Heart left ventricle (tissue), 16 donors: ENCODE measurements at regions of chr12 and their contacts with region 1.

Region 1: GRCh38 chr12:89542912-89543592 is 17.2 kb upstream of the POC1B start:
- DNase-seq: peak in 4 of 5 donors; percentile 39 to 63 (median 53)
- ATAC-seq: peak; percentile 47 to 79 (median 73)
- H3K4me3 ChIP-seq: no peak overlapping the region
- H3K27ac ChIP-seq: no peak overlapping the region
- H3K4me1 ChIP-seq: peaks cover 0 to 32% (median 19%) of the 10 kb centered on the region in 12 donors
- H3K27me3 ChIP-seq: no peaks in the 10 kb centered on the region
- CTCF ChIP-seq: peak; percentile 79 to 93 (median 88)
- POLR2A ChIP-seq: no peak

Region 2: DNA sequence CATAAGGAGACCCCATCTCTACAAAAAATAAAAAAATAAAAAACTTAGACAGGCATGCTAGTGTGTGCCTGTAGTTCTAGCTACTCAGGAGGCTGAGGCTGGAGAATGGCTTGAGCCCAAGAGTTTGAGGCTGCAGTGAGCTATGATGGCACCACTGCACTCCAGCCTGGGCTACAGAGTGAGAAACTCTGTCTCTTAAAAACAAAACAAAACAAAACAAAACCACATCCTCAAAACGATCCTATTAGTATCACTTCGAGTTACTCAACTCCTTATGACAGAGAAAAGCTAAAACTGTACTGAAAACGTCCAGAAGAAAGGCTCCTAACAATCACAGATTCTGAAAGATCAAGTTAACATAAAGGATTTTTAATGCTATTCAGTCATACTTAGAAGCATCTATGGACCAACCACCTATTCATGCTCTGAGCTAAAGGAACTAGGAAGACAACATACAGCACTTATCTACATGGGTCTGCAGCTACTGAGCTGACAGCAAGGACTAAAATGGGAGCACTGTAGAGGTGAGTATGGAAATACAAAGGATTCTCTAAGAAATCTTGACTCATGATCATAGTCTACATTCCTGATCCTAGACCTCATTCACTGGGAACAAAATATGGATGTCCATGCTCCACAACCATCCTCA is 115.4 kb before region 1 on chr12:
- intact Hi-C with region 1: no loop called
- DNase-seq: no peak
- ATAC-seq: peak in 1 of 4 donors; percentile 26
- H3K4me3 ChIP-seq: no peak overlapping the region
- H3K27ac ChIP-seq: peak overlapping the region in 1 of 12 donors; percentile 72
- H3K4me1 ChIP-seq: peaks cover 0 to 22% (median 0%) of the 10 kb centered on the region in 12 donors
- H3K27me3 ChIP-seq: no peaks in the 10 kb centered on the region
- CTCF ChIP-seq: no peak
- POLR2A ChIP-seq: no peak

Region 3: DNA sequence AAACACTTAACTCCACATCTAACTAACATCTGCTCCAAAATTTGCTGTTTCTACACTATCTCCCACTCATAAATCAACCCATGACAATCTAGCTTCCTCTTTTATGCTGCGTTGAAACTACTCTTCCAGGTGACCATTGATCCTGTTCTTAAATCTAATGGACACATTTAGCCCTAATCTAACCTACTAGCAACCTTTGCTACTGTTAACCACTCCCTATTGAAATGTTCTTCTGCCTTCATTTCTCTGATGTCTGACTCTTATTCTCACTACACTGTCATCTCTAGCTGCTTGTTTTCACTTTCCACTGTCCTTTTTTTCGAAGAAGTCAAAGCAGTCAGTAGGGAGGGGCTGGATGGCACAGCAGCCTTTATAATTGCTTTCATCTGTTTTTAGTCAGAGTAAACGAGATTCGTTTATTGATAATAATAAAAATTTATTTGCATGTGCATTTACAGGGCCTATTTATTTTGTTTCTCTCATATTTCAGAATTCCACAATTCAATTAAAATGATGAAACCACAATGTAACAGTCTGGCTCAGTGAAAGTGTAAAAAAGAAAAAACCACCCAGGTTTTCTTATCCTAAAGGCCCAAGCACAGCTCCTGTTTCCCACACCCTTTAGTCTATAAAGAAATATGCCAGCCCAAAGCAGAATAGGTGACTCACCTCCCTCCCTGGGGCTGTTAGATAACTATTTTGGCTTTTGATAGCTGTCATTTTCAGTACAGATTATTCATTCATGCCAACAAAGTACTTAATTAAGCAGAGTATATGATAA is 120.7 kb after region 1 on chr12:
- intact Hi-C with region 1: no loop called
- DNase-seq: no peak
- ATAC-seq: peak in 1 of 4 donors; percentile 29
- H3K4me3 ChIP-seq: no peak overlapping the region
- H3K27ac ChIP-seq: no peak overlapping the region
- H3K4me1 ChIP-seq: peaks cover 0 to 49% (median 28%) of the 10 kb centered on the region in 12 donors
- H3K27me3 ChIP-seq: no peaks in the 10 kb centered on the region
- CTCF ChIP-seq: no peak
- POLR2A ChIP-seq: no peak

Region 4: GRCh38 chr12:90102957-90103652 is 560.1 kb after region 1 on chr12:
- intact Hi-C with region 1: loop called (anchors 2 to 10 kb)
- DNase-seq: no peak
- ATAC-seq: peak in 2 of 4 donors; percentile 46 to 53
- H3K4me3 ChIP-seq: no peak overlapping the region
- H3K27ac ChIP-seq: no peak overlapping the region
- H3K4me1 ChIP-seq: peaks cover 0 to 4% (median 0%) of the 10 kb centered on the region in 12 donors
- H3K27me3 ChIP-seq: no peaks in the 10 kb centered on the region
- CTCF ChIP-seq: peak in 11 of 12 donors; percentile 12 to 61 (median 39)
- POLR2A ChIP-seq: no peak

Region 5: GRCh38 chr12:90854136-90854689 is 1311.2 kb after region 1 on chr12:
- intact Hi-C with region 1: loop called in 6 of 10 experiments (anchors 5 to 10 kb)
- DNase-seq: no peak
- ATAC-seq: no peak
- H3K4me3 ChIP-seq: no peak overlapping the region
- H3K27ac ChIP-seq: no peak overlapping the region
- H3K4me1 ChIP-seq: peaks cover 0 to 11% (median 0%) of the 10 kb centered on the region in 12 donors
- H3K27me3 ChIP-seq: no peaks in the 10 kb centered on the region
- CTCF ChIP-seq: peak; percentile 46 to 80 (median 70)
- POLR2A ChIP-seq: no peak

Region 6: GRCh38 chr12:90940872-90941499 is 1397.9 kb after region 1 on chr12:
- intact Hi-C with region 1: loop called in 4 of 10 experiments (anchors 5 to 10 kb)
- DNase-seq: no peak
- ATAC-seq: no peak
- H3K4me3 ChIP-seq: no peak overlapping the region
- H3K27ac ChIP-seq: no peak overlapping the region
- H3K4me1 ChIP-seq: peaks cover 0 to 4% (median 0%) of the 10 kb centered on the region in 12 donors
- H3K27me3 ChIP-seq: no peaks in the 10 kb centered on the region
- CTCF ChIP-seq: peak; percentile 29 to 73 (median 54)
- POLR2A ChIP-seq: no peak